ENCODE measurements at regions of chr2 and their contacts with region 1.

Region 1: GRCh38 chr2:132651115-132652045 is 18.6 kb downstream of the LYPD1 start:
- DNase-seq: peak; percentile 59
- ATAC-seq: peak; percentile 99
- H3K4me3 ChIP-seq: no peak overlapping the region
- H3K27ac ChIP-seq: no peak overlapping the region
- H3K4me1 ChIP-seq: no peaks in the 10 kb centered on the region
- H3K27me3 ChIP-seq: no peaks in the 10 kb centered on the region
- CTCF ChIP-seq: peak; percentile 76
- EP300 ChIP-seq: no peak
- POLR2A ChIP-seq: no peak
- RAD21 ChIP-seq: 0 out of 2 replicates have a peak, but pooled peaks have one; percentile 39

Region 2: GRCh38 chr2:133171393-133172004 is 520.1 kb after region 1 on chr2:
- CTCF ChIA-PET with region 1: interaction called, 10 read pairs
- POLR2A ChIA-PET with region 1: no interaction called
- in situ Hi-C with region 1: loop called (anchors 25 kb)
- intact Hi-C with region 1: loop called (anchors 1 kb)
- DNase-seq: peak; percentile 58
- ATAC-seq: peak; percentile 73
- H3K4me3 ChIP-seq: no peak overlapping the region
- H3K27ac ChIP-seq: no peak overlapping the region
- H3K4me1 ChIP-seq: no peaks in the 10 kb centered on the region
- H3K27me3 ChIP-seq: no peaks in the 10 kb centered on the region
- CTCF ChIP-seq: peak; percentile 84
- EP300 ChIP-seq: no peak
- POLR2A ChIP-seq: no peak
- RAD21 ChIP-seq: peak; percentile 75

Region 3: GRCh38 chr2:133844214-133844892 is 1193.0 kb after region 1 on chr2:
- CTCF ChIA-PET with region 1: interaction called, 3 read pairs
- POLR2A ChIA-PET with region 1: no interaction called
- in situ Hi-C with region 1: loop called (anchors 10 kb)
- intact Hi-C with region 1: loop called (anchors 2 kb)
- DNase-seq: peak; percentile 58
- ATAC-seq: peak; percentile 96
- H3K4me3 ChIP-seq: no peak overlapping the region
- H3K27ac ChIP-seq: no peak overlapping the region
- H3K4me1 ChIP-seq: no peaks in the 10 kb centered on the region
- H3K27me3 ChIP-seq: peaks cover 0 to 1% of the 10 kb centered on the region in 2 experiments; a peak in 2 of 5 replicates
- CTCF ChIP-seq: peak; percentile 93
- EP300 ChIP-seq: no peak
- POLR2A ChIP-seq: no peak
- RAD21 ChIP-seq: peak; percentile 86